ENCODE measurements at regions of chr1 and their contacts with region 1.

Region 1: GRCh38 chr1:40691538-40692428 is at the start of gene NFYC:
- DNase-seq: peak; percentile 98
- ATAC-seq: peak; percentile 89
- H3K4me3 Mint-ChIP-seq: peak within 1 kb of the TSS; percentile 87
- H3K27ac Mint-ChIP-seq: peak within 1 kb of the TSS; percentile 93
- H3K4me1 Mint-ChIP-seq: peaks cover 52% of the 10 kb centered on the region
- H3K27me3 Mint-ChIP-seq: no peaks in the 10 kb centered on the region
- total RNA-seq, gene NFYC: 71.5 to 74.4 TPM

Region 2: DNA sequence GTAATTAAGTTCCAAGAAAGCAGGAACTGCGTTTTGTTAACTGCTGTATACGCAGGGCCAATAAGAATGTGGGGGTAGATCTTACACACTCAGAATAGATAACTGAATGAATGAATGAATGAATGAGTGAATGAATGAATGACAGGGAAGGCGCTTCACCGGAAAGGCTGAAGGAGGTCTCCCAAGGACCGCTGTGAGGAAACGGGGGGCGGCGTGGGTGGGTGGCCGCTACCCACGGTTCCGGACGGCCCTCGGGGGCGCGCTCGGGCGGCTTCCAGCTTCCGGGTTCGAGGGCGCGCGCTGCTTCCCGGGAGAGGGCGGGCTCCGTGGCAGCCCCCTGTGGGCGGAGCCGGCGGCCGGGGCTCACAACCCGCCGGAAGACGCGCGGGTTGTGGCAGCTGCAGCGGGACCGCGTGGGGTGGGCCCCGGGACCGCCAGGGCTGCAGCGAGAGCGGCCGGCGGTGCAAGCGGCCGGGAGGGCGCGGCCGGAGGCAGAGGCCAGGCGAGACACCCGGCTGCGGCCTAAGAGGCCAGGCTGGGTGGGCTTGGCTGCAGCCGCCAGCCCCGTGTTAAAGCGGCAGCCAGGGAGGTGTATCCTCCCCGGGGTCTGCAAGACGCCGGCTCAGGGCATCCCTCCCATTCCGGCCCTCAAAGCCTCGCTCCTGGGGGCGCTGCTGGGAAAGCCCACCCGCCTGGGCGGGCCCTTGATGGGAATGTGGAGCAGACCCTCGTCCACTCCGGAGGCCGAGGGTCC is 214.7 kb before region 1 on chr1 and contains the start of gene ZFP69:
- CTCF ChIA-PET with region 1: no interaction called
- POLR2A ChIA-PET with region 1: no interaction called
- DNase-seq: peak; percentile 80
- ATAC-seq: peak; percentile 92
- H3K4me3 Mint-ChIP-seq: peak within 1 kb of the TSS; percentile 76
- H3K27ac Mint-ChIP-seq: peak within 1 kb of the TSS; percentile 81
- H3K4me1 Mint-ChIP-seq: peaks cover 20% of the 10 kb centered on the region
- H3K27me3 Mint-ChIP-seq: no peaks in the 10 kb centered on the region
- total RNA-seq, gene ZFP69: 2.2 to 2.7 TPM

Region 3: GRCh38 chr1:40662864-40663263 is 28.9 kb before region 1 on chr1:
- CTCF ChIA-PET with region 1: interaction called, 4 read pairs
- POLR2A ChIA-PET with region 1: interaction called, 12 read pairs
- DNase-seq: peak; percentile 29
- ATAC-seq: no peak
- H3K4me3 Mint-ChIP-seq: no peak overlapping the region
- H3K27ac Mint-ChIP-seq: no peak overlapping the region
- H3K4me1 Mint-ChIP-seq: peaks cover 20% of the 10 kb centered on the region
- H3K27me3 Mint-ChIP-seq: no peaks in the 10 kb centered on the region

Region 4: GRCh38 chr1:40703316-40703715 is 11.5 kb after region 1 on chr1:
- CTCF ChIA-PET with region 1: interaction called, 41 read pairs
- POLR2A ChIA-PET with region 1: interaction called, 66 read pairs
- DNase-seq: no peak
- ATAC-seq: no peak
- H3K4me3 Mint-ChIP-seq: no peak overlapping the region
- H3K27ac Mint-ChIP-seq: no peak overlapping the region
- H3K4me1 Mint-ChIP-seq: peaks cover 49% of the 10 kb centered on the region
- H3K27me3 Mint-ChIP-seq: no peaks in the 10 kb centered on the region

Region 5: DNA sequence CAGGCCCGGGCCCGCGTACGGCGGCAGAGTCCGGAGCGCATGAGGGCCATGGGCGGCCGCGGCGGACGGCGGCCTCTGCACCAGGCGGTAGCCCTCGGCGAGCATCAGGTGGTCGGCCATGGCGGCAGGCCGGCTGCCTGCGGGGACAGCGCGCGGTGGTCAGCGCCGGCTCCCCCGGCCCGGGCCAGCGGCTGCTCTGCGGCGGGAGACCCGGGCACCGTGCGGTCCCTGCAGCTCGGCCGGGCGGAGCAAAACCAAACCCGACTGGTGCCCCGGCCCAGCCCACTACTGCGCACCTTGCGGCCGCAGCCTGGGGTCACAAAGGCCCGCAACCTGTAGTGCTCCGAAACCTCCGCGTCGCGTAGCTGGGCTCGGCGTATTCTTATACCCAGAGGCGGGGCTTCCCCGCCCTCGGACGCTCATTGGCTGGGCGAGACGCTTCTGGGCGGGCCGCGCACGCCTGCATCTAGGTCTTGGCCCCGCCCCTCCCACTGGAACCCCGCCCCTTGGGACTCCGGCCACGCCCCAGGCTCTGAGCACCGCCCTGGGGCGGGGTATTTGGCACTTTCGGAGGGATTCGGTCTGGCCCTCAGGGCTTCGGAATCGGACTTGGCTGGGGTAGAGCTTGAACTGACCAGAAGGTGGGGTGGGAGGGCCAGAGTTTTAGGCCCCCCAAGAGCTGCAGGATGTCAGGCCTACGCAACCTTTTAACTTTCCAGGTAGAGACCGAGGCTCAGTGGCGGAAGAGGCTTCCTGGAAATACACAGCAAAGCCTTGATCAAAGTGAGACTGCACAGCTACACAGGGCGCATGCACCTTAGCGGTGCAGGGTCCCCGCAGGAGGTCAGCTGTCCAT is 170.5 kb after region 1 on chr1 and contains the start of gene CITED4:
- CTCF ChIA-PET with region 1: no interaction called
- POLR2A ChIA-PET with region 1: interaction called, 14 read pairs
- DNase-seq: peak; percentile 97
- ATAC-seq: peak; percentile 93
- H3K4me3 Mint-ChIP-seq: peak within 1 kb of the TSS; percentile 79
- H3K27ac Mint-ChIP-seq: peak within 1 kb of the TSS; percentile 96
- H3K4me1 Mint-ChIP-seq: peaks cover 30% of the 10 kb centered on the region
- H3K27me3 Mint-ChIP-seq: peaks cover 21% of the 10 kb centered on the region
- total RNA-seq, gene CITED4: 9.1 to 10.0 TPM